Ascending aorta (tissue), 2 donors: ENCODE measurements at regions of chr13 and their contacts with region 1.

Region 1: DNA sequence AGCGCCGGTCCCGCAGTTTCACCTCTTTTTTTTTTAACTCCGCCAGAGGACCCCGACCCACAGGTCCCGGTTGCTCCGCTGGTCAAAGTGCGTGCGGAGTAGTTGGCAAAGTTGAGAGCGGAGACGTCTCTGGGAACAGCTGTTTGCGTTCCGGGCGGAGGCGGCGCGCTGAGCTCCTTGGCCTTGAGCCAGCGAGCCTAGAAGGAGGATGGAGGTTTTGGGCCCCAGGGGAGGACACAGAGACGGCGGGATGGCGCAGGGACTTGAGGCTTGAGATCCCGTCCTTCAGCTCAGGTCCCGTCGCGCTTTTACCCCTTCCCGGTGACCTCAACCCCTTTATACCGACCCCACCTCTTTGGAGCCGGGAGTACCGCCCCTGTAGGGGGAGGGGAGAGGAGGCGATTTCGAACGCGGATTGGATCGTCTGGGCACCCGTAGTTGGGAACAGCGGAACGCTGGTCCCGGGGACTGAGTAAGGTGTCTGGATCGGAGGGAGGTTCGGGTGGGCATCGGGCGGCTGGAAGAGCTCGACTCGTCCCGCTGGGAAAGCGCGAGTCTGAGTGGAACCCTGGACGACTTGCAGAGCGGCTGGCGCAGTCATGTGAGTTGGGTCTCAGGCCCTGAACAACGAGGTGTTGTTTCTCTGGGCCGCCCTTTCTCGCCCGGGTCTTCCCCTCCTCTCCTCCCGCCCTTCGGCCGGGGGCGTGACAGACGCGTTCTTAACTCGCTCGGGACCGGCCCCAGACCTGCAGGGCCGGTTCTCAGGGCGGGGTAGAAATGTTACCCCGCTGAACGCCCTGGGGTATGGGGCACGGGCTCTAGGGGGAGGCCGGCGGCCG is at the start of gene WBP4:
- DNase-seq: peak; percentile 74 to 96
- H3K4me3 ChIP-seq: peak within 1 kb of the TSS; percentile 81 to 93
- H3K27ac ChIP-seq: peak within 1 kb of the TSS; percentile 97 to 99
- H3K4me1 ChIP-seq: peaks cover 25 to 45% of the 10 kb centered on the region in 2 donors
- H3K27me3 ChIP-seq: no peaks in the 10 kb centered on the region
- CTCF ChIP-seq: peak in 2 of 3 experiments; percentile 19 to 25
- total RNA-seq, gene WBP4: 0.96 TPM

Region 2: DNA sequence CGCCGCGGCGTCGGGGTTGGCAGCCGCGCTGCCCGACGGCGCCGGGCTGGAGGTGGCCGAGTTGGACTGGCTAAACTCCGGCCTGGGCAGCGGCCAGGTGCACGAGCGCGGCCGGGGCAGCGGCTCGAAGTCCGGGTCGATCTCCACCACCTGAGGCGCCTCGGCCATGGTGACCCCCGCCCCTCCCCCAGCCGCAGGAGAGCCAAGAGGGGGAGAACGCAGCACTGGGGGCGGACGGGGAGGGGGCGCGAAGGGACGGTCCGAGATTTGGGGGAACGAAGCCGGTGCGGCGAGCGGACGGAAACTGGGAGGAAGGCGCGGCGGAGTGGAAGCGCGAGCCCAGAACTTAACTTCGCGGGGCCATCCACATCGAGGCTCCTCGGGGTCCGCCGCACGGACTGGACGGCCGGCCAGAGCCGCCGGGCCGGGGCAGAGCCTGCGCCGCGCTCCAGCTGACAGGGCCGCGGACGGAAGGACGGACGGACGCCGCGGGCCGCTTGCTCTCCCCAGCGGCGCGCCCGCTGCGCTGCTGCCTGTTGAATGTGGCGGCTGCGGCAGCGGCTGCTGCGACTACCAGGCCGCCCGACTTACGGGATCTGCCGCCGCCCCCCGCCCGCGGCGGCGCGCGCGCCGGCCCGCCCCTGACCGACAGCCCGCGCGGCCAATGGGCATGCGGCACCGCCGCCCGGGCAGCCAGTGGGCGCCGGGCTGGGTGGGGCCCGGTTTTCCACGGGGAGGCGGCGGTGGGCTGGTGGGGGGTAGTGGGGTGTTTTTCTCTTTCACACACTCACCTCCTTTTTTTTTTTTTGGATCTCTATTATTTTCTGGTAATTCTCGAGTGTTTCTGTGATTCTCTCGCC is 395.0 kb before region 1 on chr13 and contains the start of gene FOXO1:
- intact Hi-C with region 1: loop called (anchors 5 kb)
- DNase-seq: peak; percentile 65 to 94
- H3K4me3 ChIP-seq: peak within 1 kb of the TSS; percentile 74 to 79
- H3K27ac ChIP-seq: peak within 1 kb of the TSS; percentile 96 to 100
- H3K4me1 ChIP-seq: peaks cover 0 to 18% of the 10 kb centered on the region in 2 donors
- H3K27me3 ChIP-seq: no peaks in the 10 kb centered on the region
- CTCF ChIP-seq: peak in 1 of 3 experiments; percentile 17
- total RNA-seq, gene FOXO1: 65.1 TPM

Region 3: GRCh38 chr13:40922437-40923040 is 138.8 kb before region 1 on chr13:
- intact Hi-C with region 1: loop called (anchors 1 kb)
- DNase-seq: no peak
- H3K4me3 ChIP-seq: no peak overlapping the region
- H3K27ac ChIP-seq: no peak overlapping the region
- H3K4me1 ChIP-seq: peaks cover 0 to 6% of the 10 kb centered on the region in 2 donors
- H3K27me3 ChIP-seq: no peaks in the 10 kb centered on the region
- CTCF ChIP-seq: no peak

Region 4: DNA sequence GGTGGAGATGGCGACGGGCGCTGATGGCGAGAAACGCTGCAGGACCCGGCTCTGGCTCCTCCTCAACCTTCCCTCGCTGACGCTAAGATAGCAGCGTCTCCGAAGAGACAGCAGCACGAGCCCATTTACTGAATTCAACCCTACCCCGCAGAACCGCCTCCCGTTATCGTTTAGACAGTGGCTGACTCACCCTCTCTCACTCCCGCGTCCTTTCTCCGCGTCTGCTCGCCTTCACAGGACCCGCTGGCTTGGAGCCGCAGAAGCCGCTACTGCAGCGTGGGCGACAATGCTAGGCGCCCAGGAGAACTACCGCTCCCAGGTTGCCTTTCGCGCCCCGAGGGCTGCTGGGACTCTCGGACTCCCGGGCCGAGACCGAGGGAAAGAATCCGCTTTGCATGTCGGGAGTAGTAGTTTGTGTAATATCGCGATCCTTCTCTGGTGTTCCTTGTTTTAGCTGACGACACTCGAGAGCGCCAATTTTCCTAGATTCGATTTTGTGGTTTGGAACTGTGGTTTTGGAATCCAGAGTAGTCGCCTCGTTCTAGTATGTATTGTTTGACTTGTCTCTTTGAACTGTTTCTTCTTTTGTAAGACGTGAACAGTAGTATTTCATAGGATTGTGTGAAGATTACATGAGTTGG is 71.3 kb after region 1 on chr13 and contains the start of gene KBTBD6:
- intact Hi-C with region 1: loop called (anchors 2 kb)
- DNase-seq: peak; percentile 92 to 98
- H3K4me3 ChIP-seq: peak within 1 kb of the TSS; percentile 77 to 83
- H3K27ac ChIP-seq: peak within 1 kb of the TSS; percentile 76 to 77
- H3K4me1 ChIP-seq: peaks cover 0 to 10% of the 10 kb centered on the region in 2 donors
- H3K27me3 ChIP-seq: no peaks in the 10 kb centered on the region
- CTCF ChIP-seq: no peak
- total RNA-seq, gene KBTBD6: 2.0 TPM

Region 5: GRCh38 chr13:41263261-41264027 is 202.2 kb after region 1 on chr13 and contains the start of gene MTRF1:
- intact Hi-C with region 1: loop called (anchors 5 kb)
- DNase-seq: peak in 1 of 2 donors; percentile 84
- H3K4me3 ChIP-seq: peak within 1 kb of the TSS; percentile 65 to 75
- H3K27ac ChIP-seq: peak within 1 kb of the TSS; percentile 73 to 85
- H3K4me1 ChIP-seq: peaks cover 0 to 6% of the 10 kb centered on the region in 2 donors
- H3K27me3 ChIP-seq: no peaks in the 10 kb centered on the region
- CTCF ChIP-seq: no peak
- total RNA-seq, gene MTRF1: 17.5 TPM

Region 6: DNA sequence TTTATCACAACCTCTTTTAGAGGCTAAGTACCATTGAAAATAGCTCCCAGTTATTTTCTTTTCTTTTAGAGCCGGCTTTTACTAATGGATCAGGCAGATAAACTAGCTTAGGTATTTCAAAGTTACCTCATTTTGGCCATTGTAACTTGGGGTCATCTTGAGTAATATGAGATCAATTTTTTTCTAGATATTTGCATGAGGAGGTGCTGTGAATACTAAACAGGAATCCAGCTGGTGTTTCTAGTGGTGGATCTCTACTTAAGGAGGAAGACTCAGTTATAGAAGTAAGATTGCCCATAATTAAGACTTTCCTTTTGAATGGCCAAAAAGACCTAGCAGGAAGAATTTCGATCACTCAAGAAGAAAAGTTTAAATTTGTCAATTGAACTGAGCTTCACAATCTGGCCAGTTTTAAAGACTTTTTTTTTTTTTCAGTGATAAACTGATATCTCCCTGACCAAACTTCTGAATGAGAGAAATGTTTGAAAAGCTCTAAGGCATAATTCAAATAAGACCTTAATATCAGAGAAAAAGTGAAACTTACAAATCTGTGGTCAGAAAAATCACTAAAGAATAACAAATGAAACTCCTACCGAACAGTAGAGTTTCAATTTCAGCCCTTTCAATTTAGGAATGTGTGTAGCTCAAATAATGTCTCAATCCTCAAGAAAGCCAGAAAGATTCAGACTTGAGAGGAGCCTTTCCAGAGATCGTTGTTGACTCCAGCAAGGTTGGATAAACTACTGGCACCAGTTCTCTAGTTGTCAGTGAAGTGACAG is 238.2 kb after region 1 on chr13:
- intact Hi-C with region 1: no loop called
- DNase-seq: no peak
- H3K4me3 ChIP-seq: no peak overlapping the region
- H3K27ac ChIP-seq: no peak overlapping the region
- H3K4me1 ChIP-seq: no peaks in the 10 kb centered on the region
- H3K27me3 ChIP-seq: no peaks in the 10 kb centered on the region
- CTCF ChIP-seq: no peak

Region 7: DNA sequence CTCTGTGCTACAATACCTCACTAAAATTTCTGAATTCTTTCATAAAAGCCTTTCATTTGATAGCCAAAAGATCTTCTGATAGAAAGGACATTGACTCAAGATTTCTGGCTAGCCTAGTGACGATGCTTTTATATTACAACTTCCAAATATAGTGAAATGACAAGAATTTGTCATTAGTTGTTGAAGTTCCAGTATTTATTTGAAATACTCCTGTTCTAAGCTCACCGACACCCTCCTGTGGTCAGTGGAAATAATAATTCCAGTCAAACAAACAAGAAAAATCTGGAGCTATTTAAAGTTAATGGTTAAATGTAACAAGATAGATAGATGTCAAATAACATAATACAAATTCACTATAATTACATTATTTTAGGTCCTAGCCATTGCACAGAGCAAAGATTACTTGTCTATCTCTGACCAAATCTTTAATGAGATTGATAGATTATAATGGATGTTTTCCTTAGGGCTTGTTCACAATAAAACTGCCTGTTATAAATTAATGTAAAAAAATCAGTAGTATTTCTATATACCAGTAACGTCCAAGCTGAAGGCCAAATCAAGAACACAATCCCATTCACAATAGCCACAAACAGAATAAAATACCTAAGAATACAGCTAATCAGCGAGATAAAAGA is 591.5 kb after region 1 on chr13:
- intact Hi-C with region 1: loop called (anchors 10 kb)
- DNase-seq: no peak
- H3K4me3 ChIP-seq: no peak overlapping the region
- H3K27ac ChIP-seq: peak overlapping the region in 1 of 2 donors; percentile 40
- H3K4me1 ChIP-seq: peaks cover 0 to 14% of the 10 kb centered on the region in 2 donors
- H3K27me3 ChIP-seq: no peaks in the 10 kb centered on the region
- CTCF ChIP-seq: peak; percentile 49 to 70 (median 64)

Region 8: DNA sequence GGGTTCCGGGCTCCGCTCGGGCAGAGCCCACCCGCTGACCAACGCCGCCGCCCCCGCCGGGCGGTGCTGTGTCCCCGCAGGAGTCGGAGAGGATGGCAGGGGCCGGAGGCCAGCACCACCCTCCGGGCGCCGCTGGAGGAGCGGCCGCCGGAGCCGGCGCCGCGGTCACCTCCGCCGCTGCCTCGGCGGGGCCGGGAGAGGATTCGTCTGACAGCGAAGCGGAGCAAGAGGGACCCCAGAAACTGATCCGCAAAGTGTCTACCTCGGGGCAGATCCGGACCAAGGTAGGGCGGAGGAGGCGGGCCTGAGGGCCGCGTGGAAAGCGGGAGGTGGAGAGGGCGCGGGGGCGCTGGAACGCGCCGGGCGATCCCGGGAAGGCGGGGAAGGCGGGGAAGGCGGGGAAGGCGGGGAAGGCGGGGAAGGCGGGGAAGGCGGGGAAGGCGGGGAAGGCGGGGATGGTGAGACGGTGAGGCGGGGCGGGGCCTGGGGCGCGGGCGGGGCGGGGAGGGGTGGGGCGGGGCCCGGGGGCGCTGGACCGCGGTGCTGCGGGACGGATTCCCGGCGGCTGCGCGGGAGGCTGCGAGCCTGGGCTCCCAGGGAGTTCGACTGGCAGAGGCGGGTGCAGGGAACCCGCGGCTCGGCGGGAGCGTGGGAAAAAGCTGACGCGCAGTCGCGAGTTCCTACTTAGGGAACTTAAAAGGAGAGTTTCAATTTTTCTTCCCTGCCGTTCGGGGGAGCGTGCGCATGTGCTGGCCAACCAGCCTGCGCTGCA is 987.6 kb after region 1 on chr13:
- intact Hi-C with region 1: loop called (anchors 5 kb)
- DNase-seq: peak; percentile 30 to 91
- H3K4me3 ChIP-seq: peak overlapping the region; percentile 86 to 96
- H3K27ac ChIP-seq: peak overlapping the region; percentile 91 to 99
- H3K4me1 ChIP-seq: peaks cover 2 to 8% of the 10 kb centered on the region in 2 donors
- H3K27me3 ChIP-seq: no peaks in the 10 kb centered on the region
- CTCF ChIP-seq: peak in 2 of 3 experiments; percentile 27 to 30